Posterior vena cava (tissue), 2 donors: ENCODE measurements at regions of chr4 and their contacts with region 1.

Region 1: GRCh38 chr4:2852481-2852921 is 8.9 kb downstream of the ADD1 start:
- DNase-seq: no peak

Region 2: DNA sequence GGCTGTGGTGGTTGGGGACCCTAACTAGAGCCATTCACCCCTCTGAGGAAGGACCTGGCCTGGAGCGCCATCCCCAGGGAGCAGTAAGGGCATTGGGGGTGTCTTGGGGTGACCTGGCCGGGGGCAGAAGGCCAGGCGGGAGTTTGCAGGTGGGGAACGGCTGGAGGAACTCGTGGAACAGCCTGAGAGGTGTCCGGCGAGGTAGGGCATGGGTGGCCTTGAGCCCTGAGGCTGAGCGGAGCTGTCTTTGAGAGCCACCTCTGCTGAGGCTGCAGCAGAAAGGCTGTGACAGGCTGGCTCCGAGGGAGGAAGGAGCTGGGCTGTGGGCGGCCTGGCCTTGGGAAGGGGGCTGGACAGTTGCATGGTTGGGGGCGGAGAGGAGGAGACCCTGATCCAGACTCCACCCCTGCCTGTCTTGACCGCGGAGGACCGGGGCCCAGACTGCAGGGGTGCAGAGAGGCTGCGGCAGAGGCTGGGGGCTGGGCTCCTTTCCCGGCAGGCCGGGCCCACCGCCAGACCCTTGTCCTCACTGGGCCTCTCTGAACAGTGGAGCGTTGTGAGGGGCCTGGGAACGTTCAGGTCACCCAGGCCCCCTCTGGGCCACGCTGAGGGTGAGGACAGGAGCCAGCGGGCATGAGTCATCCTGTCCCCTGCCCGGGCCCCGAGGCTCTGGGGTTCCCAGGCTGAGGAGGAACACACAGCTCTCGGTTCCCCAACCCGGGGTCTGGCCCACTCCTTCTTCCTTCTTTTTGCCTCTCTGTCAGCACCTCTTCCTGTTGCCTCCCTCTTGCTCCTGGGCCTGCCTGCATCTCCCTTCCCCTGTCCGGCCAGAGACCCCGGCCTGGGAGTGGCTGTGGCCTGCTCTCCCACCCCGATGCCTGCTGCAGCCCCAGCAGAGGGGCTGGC is 51.6 kb before region 1 on chr4:
- intact Hi-C with region 1: loop called in 1 of 2 experiments (anchors 10 kb)
- DNase-seq: peak; percentile 93